ENCODE measurements at regions of chr16 and their contacts with region 1.

Region 1: GRCh38 chr16:48623304-48624016 is 13.5 kb upstream of the N4BP1 start:
- DNase-seq: peak; percentile 76
- ATAC-seq: peak; percentile 95
- H3K4me3 ChIP-seq: peak overlapping the region; percentile 67 to 80 (median 73)
- H3K27ac ChIP-seq: peak overlapping the region; percentile 69
- H3K4me1 ChIP-seq: peaks cover 41% of the 10 kb centered on the region
- H3K27me3 ChIP-seq: peaks cover 0 to 8% of the 10 kb centered on the region in 2 experiments; a peak in 4 of 5 replicates
- CTCF ChIP-seq: peak; percentile 100
- EP300 ChIP-seq: peak in 1 of 2 experiments; percentile 35; a peak in 1 of 4 replicates
- POLR2A ChIP-seq: peak; percentile 41 to 67; a peak in 2 of 4 replicates
- RAD21 ChIP-seq: peak; percentile 98

Region 2: GRCh38 chr16:48231727-48232492 is 391.6 kb before region 1 on chr16:
- CTCF ChIA-PET with region 1: no interaction called
- POLR2A ChIA-PET with region 1: interaction called, 10 read pairs
- in situ Hi-C with region 1: no loop called
- intact Hi-C with region 1: no loop called
- DNase-seq: peak; percentile 49
- ATAC-seq: peak; percentile 60
- H3K4me3 ChIP-seq: no peak overlapping the region
- H3K27ac ChIP-seq: no peak overlapping the region
- H3K4me1 ChIP-seq: peaks cover 65% of the 10 kb centered on the region
- H3K27me3 ChIP-seq: no peaks in the 10 kb centered on the region
- CTCF ChIP-seq: peak; percentile 76
- EP300 ChIP-seq: no peak
- POLR2A ChIP-seq: no peak
- RAD21 ChIP-seq: peak; percentile 76

Region 3: DNA sequence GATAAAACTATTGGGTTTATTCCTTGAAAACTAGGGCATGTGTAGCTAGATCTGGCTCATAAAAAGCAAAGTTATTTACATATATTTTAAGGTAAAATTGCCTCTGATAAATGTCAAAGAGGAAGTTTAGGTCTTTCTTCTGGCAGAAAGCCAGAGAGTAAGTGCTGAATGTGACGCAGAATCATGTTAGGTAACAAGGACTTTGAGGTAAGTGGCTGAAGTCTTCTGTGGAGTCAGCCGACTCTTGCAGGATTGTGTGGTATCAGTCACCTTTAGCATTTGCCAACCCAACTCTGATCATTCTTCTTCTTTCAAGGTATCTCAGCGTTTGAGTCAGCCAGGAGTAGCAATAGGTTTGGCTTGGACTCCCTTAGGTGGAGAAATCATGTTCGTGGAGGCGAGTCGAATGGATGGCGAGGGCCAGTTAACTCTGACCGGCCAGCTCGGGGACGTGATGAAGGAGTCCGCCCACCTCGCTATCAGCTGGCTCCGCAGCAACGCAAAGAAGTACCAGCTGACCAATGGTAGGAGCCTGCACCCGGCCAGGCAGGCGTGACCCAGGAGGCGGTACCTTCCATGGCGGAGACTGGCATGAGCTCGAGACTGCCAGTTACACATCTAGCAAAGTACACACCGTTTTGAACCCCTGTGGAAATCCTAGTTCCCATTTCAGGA is 276.1 kb before region 1 on chr16:
- CTCF ChIA-PET with region 1: no interaction called
- POLR2A ChIA-PET with region 1: interaction called, 3 read pairs
- in situ Hi-C with region 1: loop called (anchors 5 kb)
- intact Hi-C with region 1: loop called (anchors 2 kb)
- DNase-seq: no peak
- ATAC-seq: no peak
- H3K4me3 ChIP-seq: no peak overlapping the region
- H3K27ac ChIP-seq: no peak overlapping the region
- H3K4me1 ChIP-seq: no peaks in the 10 kb centered on the region
- H3K27me3 ChIP-seq: no peaks in the 10 kb centered on the region
- CTCF ChIP-seq: no peak
- EP300 ChIP-seq: no peak
- POLR2A ChIP-seq: 0 out of 4 replicates have a peak, but pooled peaks of 1 of the 2 experiments have one; percentile 16
- RAD21 ChIP-seq: no peak

Region 4: DNA sequence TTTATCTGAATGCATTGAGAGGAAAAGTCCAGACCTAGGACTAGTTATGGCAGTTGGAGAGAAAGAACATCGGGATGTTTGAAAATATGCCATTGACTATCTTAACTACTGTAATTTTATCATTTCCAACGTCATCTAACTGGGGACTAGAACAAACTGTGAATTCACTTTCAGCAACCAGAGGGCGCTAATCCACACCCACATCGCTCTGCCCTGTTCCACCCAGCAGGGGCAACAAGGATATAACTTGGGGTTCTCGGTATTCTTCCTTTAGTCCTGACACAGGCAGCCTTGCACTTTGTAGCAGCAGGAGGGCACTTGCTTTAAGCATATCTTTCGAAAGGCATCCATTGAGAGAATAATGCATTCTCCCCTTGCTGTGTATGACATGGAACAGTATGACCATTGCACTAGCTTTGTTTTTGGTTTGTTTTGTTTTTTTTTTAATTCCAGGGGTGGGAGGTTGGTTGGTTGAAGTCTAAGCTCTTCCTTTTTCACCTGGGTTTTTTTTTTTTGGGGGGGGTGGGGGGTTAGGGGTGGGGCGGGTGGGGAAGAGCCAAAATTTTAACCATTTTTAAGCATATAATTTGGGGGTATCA is 269.8 kb before region 1 on chr16:
- CTCF ChIA-PET with region 1: interaction called, 12 read pairs
- POLR2A ChIA-PET with region 1: interaction called, 4 read pairs
- in situ Hi-C with region 1: loop called (anchors 5 kb)
- intact Hi-C with region 1: loop called (anchors 2 kb)
- DNase-seq: peak; percentile 78
- ATAC-seq: peak; percentile 89
- H3K4me3 ChIP-seq: no peak overlapping the region
- H3K27ac ChIP-seq: no peak overlapping the region
- H3K4me1 ChIP-seq: no peaks in the 10 kb centered on the region
- H3K27me3 ChIP-seq: no peaks in the 10 kb centered on the region
- CTCF ChIP-seq: peak; percentile 90
- EP300 ChIP-seq: no peak
- POLR2A ChIP-seq: peak in 1 of 2 experiments; percentile 35; a peak in 1 of 4 replicates
- RAD21 ChIP-seq: peak; percentile 90

Region 5: GRCh38 chr16:48365581-48366164 is 257.8 kb before region 1 on chr16:
- CTCF ChIA-PET with region 1: no interaction called
- POLR2A ChIA-PET with region 1: interaction called, 20 read pairs
- in situ Hi-C with region 1: no loop called
- intact Hi-C with region 1: loop called (anchors 5 kb)
- DNase-seq: peak; percentile 83
- ATAC-seq: peak; percentile 99
- H3K4me3 ChIP-seq: peak overlapping the region; percentile 72 to 87 (median 75)
- H3K27ac ChIP-seq: peak overlapping the region; percentile 81
- H3K4me1 ChIP-seq: peaks cover 45% of the 10 kb centered on the region
- H3K27me3 ChIP-seq: no peaks in the 10 kb centered on the region; a peak in 1 of 5 replicates
- CTCF ChIP-seq: peak; percentile 53
- EP300 ChIP-seq: no peak
- POLR2A ChIP-seq: peak; percentile 93 to 96
- RAD21 ChIP-seq: no peak

Region 6: DNA sequence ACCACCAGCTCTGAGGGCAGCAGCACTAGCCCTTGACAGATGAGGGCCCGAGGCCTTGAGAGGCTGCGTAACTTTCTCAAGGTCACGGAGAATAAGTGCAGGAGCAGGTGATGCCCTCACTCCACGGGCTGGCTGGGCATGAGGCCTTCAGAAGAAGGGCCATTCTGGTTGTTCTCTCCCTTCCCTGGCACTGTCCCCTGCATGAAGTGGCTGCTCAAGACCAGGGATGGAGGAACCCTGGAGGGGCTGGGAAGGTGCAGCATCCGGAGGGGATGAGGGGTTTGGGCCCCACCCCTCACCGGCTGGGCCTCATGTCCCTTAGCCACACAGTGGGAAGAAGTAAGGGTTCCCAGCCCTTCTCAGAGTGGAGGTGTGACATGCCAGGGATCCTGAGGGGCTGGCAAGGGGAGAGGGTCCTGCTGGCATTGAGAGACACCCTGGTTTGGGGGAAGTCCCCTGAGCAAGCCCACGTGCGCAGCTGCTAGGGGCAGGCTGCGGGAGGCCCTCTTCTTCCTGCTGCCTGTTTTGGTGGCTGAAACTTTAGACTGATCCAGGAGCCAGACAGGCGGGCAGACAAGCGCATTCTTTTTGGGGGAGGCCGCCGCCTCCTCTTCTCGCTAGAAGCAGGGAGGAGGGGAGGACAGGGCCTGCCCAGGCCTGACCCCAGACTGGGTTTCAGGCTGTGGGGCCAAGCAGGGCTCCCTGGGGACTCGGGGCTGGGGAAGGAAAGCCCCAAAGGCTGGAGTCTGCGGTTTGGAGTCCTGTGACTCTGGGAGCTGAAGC is 87.4 kb before region 1 on chr16:
- CTCF ChIA-PET with region 1: interaction called, 13 read pairs
- POLR2A ChIA-PET with region 1: interaction called, 3 read pairs
- in situ Hi-C with region 1: no loop called
- intact Hi-C with region 1: loop called (anchors 1 kb)
- DNase-seq: peak; percentile 21
- ATAC-seq: peak; percentile 5
- H3K4me3 ChIP-seq: no peak overlapping the region
- H3K27ac ChIP-seq: no peak overlapping the region
- H3K4me1 ChIP-seq: peaks cover 39% of the 10 kb centered on the region
- H3K27me3 ChIP-seq: no peaks in the 10 kb centered on the region
- CTCF ChIP-seq: no peak
- EP300 ChIP-seq: no peak
- POLR2A ChIP-seq: no peak
- RAD21 ChIP-seq: no peak

Region 7: DNA sequence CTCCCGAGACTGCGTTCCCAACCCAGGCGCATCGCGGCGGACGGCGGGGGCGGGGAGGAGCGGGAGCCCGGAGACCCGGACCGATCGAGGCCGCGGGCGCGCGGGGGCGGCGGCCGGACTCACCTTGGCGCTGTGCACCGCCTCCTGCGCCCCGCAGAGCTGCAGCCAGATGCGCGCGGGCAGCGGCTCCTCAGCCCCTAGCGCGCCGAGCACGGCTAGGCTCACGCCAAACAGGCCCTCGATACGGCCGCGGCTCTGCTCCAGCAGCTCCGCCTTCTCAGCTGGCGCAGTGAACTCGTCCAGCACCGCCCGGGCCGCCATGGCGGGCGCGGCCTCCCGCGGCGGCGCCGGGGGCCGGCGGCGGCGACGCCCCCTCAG is 13.8 kb before region 1 on chr16:
- CTCF ChIA-PET with region 1: no interaction called
- POLR2A ChIA-PET with region 1: interaction called, 34 read pairs
- in situ Hi-C with region 1: no loop called
- intact Hi-C with region 1: loop called (anchors 1 kb)
- DNase-seq: no peak
- ATAC-seq: peak; percentile 68
- H3K4me3 ChIP-seq: peak overlapping the region; percentile 79 to 97 (median 95)
- H3K27ac ChIP-seq: peak overlapping the region; percentile 96
- H3K4me1 ChIP-seq: peaks cover 86% of the 10 kb centered on the region
- H3K27me3 ChIP-seq: no peaks in the 10 kb centered on the region; a peak in 1 of 5 replicates
- CTCF ChIP-seq: no peak
- EP300 ChIP-seq: no peak
- POLR2A ChIP-seq: no peak
- RAD21 ChIP-seq: peak; percentile 57; the same call in 1 of the 2 replicates

Measured in HepG2 (cell line).